ENCODE measurements at regions of chr11 and their contacts with region 1.

Region 1: DNA sequence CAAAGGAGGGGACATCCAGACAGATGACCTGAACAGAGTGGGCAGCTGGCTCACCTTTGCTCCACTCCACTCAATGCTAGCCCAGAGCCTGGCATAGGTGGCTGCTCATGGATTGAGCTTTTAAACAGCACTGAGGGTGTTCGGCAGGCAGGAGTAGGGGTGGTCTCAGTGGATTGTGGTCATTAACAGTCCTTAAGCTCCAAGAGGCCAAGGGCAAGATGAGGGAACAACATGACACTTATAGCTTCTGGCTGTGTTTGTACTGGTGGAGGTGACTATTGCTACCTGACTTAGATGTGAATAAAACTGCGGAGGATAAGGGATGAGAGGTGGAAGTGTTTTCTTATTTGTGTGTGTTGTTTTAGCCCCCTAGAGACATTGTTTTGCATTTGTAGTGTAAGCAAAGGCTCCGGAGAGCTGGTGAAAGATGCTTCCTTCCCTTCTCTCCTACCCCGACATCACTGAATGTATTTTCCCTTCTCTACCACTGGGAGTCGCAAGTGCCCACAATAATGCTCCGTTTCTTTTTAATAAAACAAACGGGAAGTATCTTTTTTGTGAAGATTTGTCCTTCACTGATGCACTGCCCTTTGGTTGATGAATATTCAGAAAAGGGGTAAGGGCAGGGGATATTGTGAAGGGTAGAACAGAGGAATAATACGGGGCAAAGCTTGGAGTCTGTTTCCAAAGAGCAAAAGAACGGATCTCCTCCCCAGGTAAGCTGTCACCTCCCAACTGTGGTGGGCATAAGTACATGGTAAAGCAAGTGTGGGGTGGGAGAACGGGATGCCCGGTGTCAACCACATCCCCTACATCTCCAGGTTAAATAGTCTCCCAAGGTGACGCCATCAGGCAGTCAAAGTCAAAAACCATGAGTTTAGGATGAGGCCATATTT is 27.5 kb upstream of the MTNR1B start:
- DNase-seq: peak; percentile 38
- ATAC-seq: peak; percentile 65
- H3K4me3 Mint-ChIP-seq: no peak overlapping the region
- H3K27ac Mint-ChIP-seq: no peak overlapping the region
- H3K4me1 Mint-ChIP-seq: no peaks in the 10 kb centered on the region
- H3K27me3 Mint-ChIP-seq: peaks cover 19% of the 10 kb centered on the region

Region 2: GRCh38 chr11:92920331-92920730 is 21.6 kb before region 1 on chr11:
- CTCF ChIA-PET with region 1: no interaction called
- POLR2A ChIA-PET with region 1: no interaction called
- intact Hi-C with region 1: no loop called
- DNase-seq: no peak
- ATAC-seq: no peak
- H3K4me3 Mint-ChIP-seq: no peak overlapping the region
- H3K27ac Mint-ChIP-seq: no peak overlapping the region
- H3K4me1 Mint-ChIP-seq: no peaks in the 10 kb centered on the region
- H3K27me3 Mint-ChIP-seq: peaks cover 4% of the 10 kb centered on the region

Region 3: DNA sequence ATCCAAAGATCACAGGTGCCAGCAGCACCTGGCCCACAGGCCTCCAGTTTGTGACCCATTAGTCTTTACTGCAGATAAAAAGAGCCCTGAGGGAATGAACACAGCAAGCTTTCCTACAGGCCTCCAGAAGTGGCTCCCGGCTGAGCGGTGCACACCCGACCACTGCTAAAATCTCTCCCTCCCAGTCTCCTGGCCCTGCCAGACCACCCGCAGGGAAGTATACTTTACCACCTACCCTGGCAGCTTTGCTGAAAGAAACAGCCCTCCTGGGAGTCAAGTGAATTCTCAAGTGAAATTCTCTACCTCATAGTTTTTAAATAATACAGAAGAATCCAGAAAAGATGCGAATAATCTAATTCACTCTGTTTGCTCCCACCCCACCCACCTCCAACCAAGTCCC is 12.1 kb after region 1 on chr11:
- CTCF ChIA-PET with region 1: interaction called, 36 read pairs
- POLR2A ChIA-PET with region 1: no interaction called
- intact Hi-C with region 1: loop called (anchors 1 kb)
- DNase-seq: no peak
- ATAC-seq: no peak
- H3K4me3 Mint-ChIP-seq: no peak overlapping the region
- H3K27ac Mint-ChIP-seq: no peak overlapping the region
- H3K4me1 Mint-ChIP-seq: no peaks in the 10 kb centered on the region
- H3K27me3 Mint-ChIP-seq: peaks cover 10% of the 10 kb centered on the region

Region 4: GRCh38 chr11:93169950-93170561 is 228.1 kb after region 1 on chr11:
- CTCF ChIA-PET with region 1: interaction called, 10 read pairs
- POLR2A ChIA-PET with region 1: no interaction called
- intact Hi-C with region 1: loop called in 1 of 2 experiments (anchors 1 kb)
- DNase-seq: no peak
- ATAC-seq: peak; percentile 36
- H3K4me3 Mint-ChIP-seq: no peak overlapping the region
- H3K27ac Mint-ChIP-seq: no peak overlapping the region
- H3K4me1 Mint-ChIP-seq: peaks cover 3% of the 10 kb centered on the region
- H3K27me3 Mint-ChIP-seq: no peaks in the 10 kb centered on the region

Region 5: GRCh38 chr11:93225662-93226061 is 283.7 kb after region 1 on chr11:
- CTCF ChIA-PET with region 1: interaction called, 61 read pairs
- POLR2A ChIA-PET with region 1: no interaction called
- intact Hi-C with region 1: loop called (anchors 1 kb)
- DNase-seq: no peak
- ATAC-seq: no peak
- H3K4me3 Mint-ChIP-seq: no peak overlapping the region
- H3K27ac Mint-ChIP-seq: no peak overlapping the region
- H3K4me1 Mint-ChIP-seq: no peaks in the 10 kb centered on the region
- H3K27me3 Mint-ChIP-seq: no peaks in the 10 kb centered on the region

Region 6: DNA sequence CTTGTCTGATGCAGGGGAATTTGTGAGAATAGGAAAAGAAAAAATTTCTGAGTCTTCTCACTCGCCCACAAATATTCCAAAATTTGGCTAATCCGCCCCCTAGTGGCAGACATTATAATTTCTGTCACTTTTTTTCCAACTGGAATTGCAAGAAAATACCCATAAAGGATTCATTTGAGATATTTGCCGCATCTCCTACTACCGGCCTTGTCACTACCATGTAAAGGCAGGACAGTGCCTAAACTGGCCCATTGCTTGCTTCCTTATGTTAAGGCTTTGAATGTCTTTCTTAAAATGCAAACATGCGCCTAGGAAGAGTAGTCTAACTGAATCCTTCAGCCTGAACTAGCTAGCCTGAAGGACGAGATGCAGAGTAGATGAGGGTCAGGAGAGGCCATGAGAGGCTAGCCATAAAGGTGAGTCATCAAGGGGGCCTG is 710.3 kb after region 1 on chr11:
- CTCF ChIA-PET with region 1: no interaction called
- POLR2A ChIA-PET with region 1: no interaction called
- intact Hi-C with region 1: loop called in 1 of 2 experiments (anchors 2 kb)
- DNase-seq: peak; percentile 22
- ATAC-seq: no peak
- H3K4me3 Mint-ChIP-seq: no peak overlapping the region
- H3K27ac Mint-ChIP-seq: no peak overlapping the region
- H3K4me1 Mint-ChIP-seq: peaks cover 12% of the 10 kb centered on the region
- H3K27me3 Mint-ChIP-seq: peaks cover 5% of the 10 kb centered on the region